PC-9 (cell line): ENCODE measurements at regions of chr22 and their contacts with region 1.

Region 1: GRCh38 chr22:39068033-39068791 is 8.9 kb upstream of the APOBEC3G start:
- DNase-seq: peak; percentile 55 to 97
- H3K4me3 ChIP-seq: peak overlapping the region; percentile 29; the same call in 1 of the 2 replicates
- H3K27ac ChIP-seq: peak overlapping the region; percentile 99
- H3K4me1 ChIP-seq: peaks cover 84% of the 10 kb centered on the region
- H3K27me3 ChIP-seq: no peaks in the 10 kb centered on the region
- CTCF ChIP-seq: peak; percentile 65

Region 2: DNA sequence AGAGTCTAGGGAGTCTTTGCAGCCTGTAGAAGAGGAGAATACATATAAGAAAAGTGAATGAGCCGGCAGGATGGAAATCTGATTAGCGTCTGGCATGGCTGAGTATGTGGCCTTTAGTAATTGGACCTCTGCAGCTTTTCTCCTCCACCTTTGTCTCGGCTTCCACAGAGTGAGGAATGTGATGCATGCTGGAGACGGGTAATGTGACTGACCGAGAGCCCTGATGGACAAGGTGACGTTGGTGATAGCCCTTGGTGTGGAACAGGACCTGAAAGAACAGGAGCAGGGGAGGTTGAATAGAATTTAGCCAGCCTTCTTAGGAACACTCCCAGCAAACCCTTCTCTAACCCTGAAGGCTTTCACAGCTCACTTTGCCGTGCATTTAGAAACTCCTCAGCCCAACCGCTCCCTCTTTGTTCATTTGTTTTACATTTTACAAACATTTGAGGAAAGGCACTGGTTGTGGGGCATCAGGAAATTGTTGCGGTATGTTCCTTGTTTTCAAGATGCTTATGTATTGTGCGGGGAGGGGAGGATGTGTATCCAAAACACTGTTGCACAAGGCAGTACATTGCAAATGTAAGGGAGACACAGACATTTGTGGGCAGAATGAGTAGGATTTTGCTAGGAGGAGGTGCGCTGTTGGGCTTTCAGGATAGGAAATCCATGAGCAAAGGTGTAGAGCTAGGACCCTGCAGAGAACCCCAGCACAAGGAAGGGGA is 355.6 kb before region 1 on chr22:
- CTCF ChIA-PET with region 1: interaction called, 13 read pairs
- POLR2A ChIA-PET with region 1: no interaction called
- intact Hi-C with region 1: no loop called
- DNase-seq: no peak
- H3K4me3 ChIP-seq: no peak overlapping the region
- H3K27ac ChIP-seq: no peak overlapping the region
- H3K4me1 ChIP-seq: peaks cover 39% of the 10 kb centered on the region
- H3K27me3 ChIP-seq: no peaks in the 10 kb centered on the region
- CTCF ChIP-seq: no peak

Region 3: DNA sequence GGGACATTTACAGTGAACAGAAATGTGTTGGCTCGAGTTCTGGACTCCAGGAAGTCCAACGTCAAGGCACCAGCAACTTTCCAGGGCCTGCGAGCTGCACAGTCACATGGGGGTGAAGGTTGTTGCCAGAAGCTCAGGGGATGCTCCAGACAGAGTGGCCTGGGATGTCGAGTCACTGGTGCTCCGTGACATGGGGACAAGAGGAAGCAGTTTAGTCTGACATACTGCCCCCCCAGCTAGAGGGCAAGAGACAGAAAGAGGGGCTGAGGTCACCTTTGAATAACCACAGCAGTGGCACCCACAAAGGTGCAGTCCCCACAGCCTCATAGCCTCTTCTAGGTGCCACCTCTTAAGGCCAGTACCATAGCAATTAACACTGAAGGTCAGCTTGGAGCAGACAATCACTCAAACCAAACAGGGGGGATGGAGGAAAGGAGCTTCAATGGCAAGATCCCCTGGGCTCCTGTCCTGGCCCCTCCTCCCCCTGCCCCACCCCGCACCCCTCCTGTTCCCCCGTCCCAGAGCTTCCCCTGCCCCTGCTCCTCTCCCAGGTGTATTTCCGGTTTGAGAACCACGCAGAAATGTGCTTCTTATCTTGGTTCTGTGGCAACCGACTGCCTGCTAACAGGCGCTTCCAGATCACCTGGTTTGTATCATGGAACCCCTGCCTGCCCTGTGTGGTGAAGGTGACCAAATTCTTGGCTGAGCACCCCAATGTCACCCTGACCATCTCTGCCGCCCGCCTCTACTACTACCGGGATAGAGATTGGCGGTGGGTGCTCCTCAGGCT is 43.5 kb before region 1 on chr22:
- CTCF ChIA-PET with region 1: no interaction called
- POLR2A ChIA-PET with region 1: no interaction called
- intact Hi-C with region 1: no loop called
- DNase-seq: no peak
- H3K4me3 ChIP-seq: no peak overlapping the region
- H3K27ac ChIP-seq: no peak overlapping the region
- H3K4me1 ChIP-seq: peaks cover 7% of the 10 kb centered on the region; the same call in 1 of the 2 replicates
- H3K27me3 ChIP-seq: no peaks in the 10 kb centered on the region
- CTCF ChIP-seq: no peak

Region 4: DNA sequence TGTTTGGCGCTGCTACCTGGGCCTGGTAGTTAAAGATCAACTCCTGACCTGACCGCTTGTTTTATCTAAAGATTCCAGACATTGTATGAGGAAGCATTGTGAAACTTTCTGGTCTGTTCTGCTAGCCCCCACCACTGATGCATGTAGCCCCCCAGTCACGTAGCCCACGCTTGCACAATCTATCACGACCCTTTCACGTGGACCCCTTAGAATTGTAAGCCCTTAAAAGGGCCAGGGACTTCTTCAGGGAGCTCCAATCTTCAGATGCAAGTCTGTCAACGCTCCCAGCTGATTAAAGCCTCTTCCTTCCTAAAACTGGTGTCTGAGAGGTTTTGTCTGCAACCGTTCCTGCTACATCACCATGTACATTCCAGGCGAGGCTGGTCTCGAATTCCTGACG is 12.6 kb before region 1 on chr22:
- CTCF ChIA-PET with region 1: no interaction called
- POLR2A ChIA-PET with region 1: interaction called, 5 read pairs
- intact Hi-C with region 1: loop called (anchors 2 kb)
- DNase-seq: no peak
- H3K4me3 ChIP-seq: no peak overlapping the region
- H3K27ac ChIP-seq: no peak overlapping the region
- H3K4me1 ChIP-seq: peaks cover 21% of the 10 kb centered on the region
- H3K27me3 ChIP-seq: no peaks in the 10 kb centered on the region
- CTCF ChIP-seq: no peak

Region 5: DNA sequence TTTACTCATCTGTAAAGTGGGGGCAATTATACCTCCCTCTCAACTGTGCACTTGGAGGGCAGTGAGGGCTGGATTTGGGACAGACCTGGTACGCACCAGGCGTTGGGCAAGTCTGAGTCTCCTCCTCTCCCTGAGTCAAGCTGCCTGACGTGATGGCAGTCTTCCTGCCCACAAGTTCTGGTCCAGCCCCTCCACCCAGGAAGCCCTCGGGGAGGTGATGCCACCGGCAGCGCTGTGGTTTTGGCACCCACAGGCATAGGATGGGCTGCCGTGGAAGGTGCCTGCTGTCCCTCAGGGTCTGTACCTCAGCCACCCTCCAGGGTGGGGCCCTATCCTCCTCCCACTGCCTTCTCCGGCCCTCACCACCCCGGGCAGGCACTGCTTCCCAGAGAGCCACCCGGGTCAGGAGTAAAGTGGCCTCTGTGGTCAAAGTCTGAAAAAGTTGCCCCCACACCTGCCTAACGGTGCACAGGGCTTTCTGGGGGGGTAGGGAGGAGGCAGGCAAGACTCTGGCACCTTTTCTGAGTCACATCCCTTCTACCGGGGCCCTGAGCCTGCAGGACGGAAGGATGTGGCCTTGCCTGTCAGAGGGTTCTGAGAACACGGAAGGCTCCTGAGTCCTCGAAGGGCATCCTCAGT is 22.3 kb after region 1 on chr22:
- CTCF ChIA-PET with region 1: no interaction called
- POLR2A ChIA-PET with region 1: no interaction called
- intact Hi-C with region 1: loop called (anchors 2 kb)
- DNase-seq: peak; percentile 86 to 97
- H3K4me3 ChIP-seq: no peak overlapping the region
- H3K27ac ChIP-seq: peak overlapping the region; percentile 71
- H3K4me1 ChIP-seq: peaks cover 76% of the 10 kb centered on the region
- H3K27me3 ChIP-seq: no peaks in the 10 kb centered on the region
- CTCF ChIP-seq: no peak

Region 6: GRCh38 chr22:39110631-39111561 is 42.7 kb after region 1 on chr22:
- CTCF ChIA-PET with region 1: no interaction called
- POLR2A ChIA-PET with region 1: no interaction called
- intact Hi-C with region 1: loop called (anchors 5 kb)
- DNase-seq: peak; percentile 34 to 92
- H3K4me3 ChIP-seq: no peak overlapping the region
- H3K27ac ChIP-seq: peak overlapping the region; percentile 47
- H3K4me1 ChIP-seq: peaks cover 21% of the 10 kb centered on the region
- H3K27me3 ChIP-seq: no peaks in the 10 kb centered on the region
- CTCF ChIP-seq: no peak